ENCODE measurements at regions of chr22 and their contacts with region 1.

Region 1: GRCh38 chr22:19402642-19403191 is 28.8 kb downstream of the HIRA start:
- DNase-seq: no peak
- ATAC-seq: no peak
- H3K4me3 ChIP-seq: no peak overlapping the region
- H3K27ac ChIP-seq: no peak overlapping the region
- H3K4me1 ChIP-seq: no peaks in the 10 kb centered on the region
- H3K27me3 ChIP-seq: no peaks in the 10 kb centered on the region
- CTCF ChIP-seq: no peak

Region 2: GRCh38 chr22:19222242-19223005 is 180.3 kb before region 1 on chr22:
- CTCF ChIA-PET with region 1: no interaction called
- POLR2A ChIA-PET with region 1: interaction called, 10 read pairs
- in situ Hi-C with region 1: no loop called
- intact Hi-C with region 1: no loop called
- DNase-seq: no peak
- ATAC-seq: no peak
- H3K4me3 ChIP-seq: no peak overlapping the region
- H3K27ac ChIP-seq: no peak overlapping the region
- H3K4me1 ChIP-seq: no peaks in the 10 kb centered on the region
- H3K27me3 ChIP-seq: no peaks in the 10 kb centered on the region
- CTCF ChIP-seq: no peak